Naive thymus-derived CD4-positive, alpha-beta T cell (primary cell): ENCODE measurements at regions of chr13 and their contacts with region 1.

Region 1: DNA sequence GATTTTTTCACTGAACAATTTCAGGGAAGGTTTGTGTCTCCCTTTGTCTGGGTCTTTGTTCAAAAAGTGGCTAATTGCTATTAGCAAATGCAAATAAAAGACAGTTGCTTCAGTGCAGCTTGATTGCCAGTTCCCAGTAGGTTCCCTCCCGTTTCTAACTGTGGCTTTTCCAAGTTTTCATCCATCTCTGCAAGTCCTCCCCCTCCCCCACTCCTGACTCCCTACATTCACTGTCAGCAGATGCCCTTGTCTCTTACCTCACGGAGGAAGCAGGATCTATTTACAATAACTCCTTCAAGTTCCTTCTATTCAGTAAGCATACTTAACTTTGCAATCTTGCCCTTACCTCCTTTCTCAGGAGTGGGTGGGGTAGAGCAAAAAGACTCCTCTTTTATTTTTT is 55.4 kb upstream of the SCEL start:
- DNase-seq: no peak
- ATAC-seq: no peak
- H3K4me3 ChIP-seq: no peak overlapping the region
- H3K4me3 Mint-ChIP-seq: no peak overlapping the region
- H3K27ac ChIP-seq: no peak overlapping the region
- H3K27ac Mint-ChIP-seq: no peak overlapping the region
- H3K4me1 ChIP-seq: no peaks in the 10 kb centered on the region
- H3K4me1 Mint-ChIP-seq: peaks cover 0 to 14% (median 9%) of the 10 kb centered on the region in 7 donors
- H3K27me3 ChIP-seq: no peaks in the 10 kb centered on the region
- H3K27me3 Mint-ChIP-seq: peaks cover 0 to 6% (median 0%) of the 10 kb centered on the region in 5 donors

Region 2: GRCh38 chr13:77026818-77027585 is 453.1 kb before region 1 on chr13 and contains the start of gene FBXL3:
- CTCF ChIA-PET with region 1: no interaction called
- POLR2A ChIA-PET with region 1: interaction called, 4 read pairs
- intact Hi-C with region 1: loop called (anchors 2 to 10 kb)
- DNase-seq: peak; percentile 77 to 88 (median 84)
- ATAC-seq: peak; percentile 90
- H3K4me3 ChIP-seq: peak within 1 kb of the TSS; percentile 87
- H3K4me3 Mint-ChIP-seq: peak within 1 kb of the TSS; percentile 93 to 100 (median 98)
- H3K27ac ChIP-seq: peak within 1 kb of the TSS; percentile 100
- H3K27ac Mint-ChIP-seq: peak within 1 kb of the TSS; percentile 92 to 99 (median 94)
- H3K4me1 ChIP-seq: peaks cover 30 to 35% of the 10 kb centered on the region in 2 donors
- H3K4me1 Mint-ChIP-seq: peaks cover 36 to 61% (median 51%) of the 10 kb centered on the region in 7 donors
- H3K27me3 ChIP-seq: no peaks in the 10 kb centered on the region
- H3K27me3 Mint-ChIP-seq: peaks cover 0 to 6% (median 3%) of the 10 kb centered on the region in 5 donors
- total RNA-seq, gene FBXL3: 44.2 to 94.2 (median 70.8) TPM

Region 3: DNA sequence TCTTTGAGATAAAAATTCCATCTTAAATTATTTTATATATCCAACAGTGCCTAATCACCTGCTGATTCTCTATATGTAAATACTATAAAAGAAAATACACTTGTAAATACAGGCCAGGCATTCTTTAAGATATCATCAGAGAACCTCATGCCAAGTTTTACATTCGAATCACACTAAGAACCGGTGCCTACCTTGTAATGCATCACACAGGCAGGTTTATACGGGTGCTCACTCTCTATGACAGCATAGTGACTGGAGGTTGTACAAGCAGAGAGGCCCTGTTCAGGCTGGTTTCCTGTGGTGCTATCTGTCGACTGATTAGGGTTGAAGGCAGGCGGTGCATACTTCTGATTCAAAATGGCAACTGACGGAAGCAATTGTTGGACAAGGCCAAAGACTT is 311.8 kb before region 1 on chr13:
- CTCF ChIA-PET with region 1: interaction called, 7 read pairs
- POLR2A ChIA-PET with region 1: interaction called, 3 read pairs
- intact Hi-C with region 1: loop called in 1 of 2 experiments (anchors 5 kb)
- DNase-seq: no peak
- ATAC-seq: no peak
- H3K4me3 ChIP-seq: no peak overlapping the region
- H3K4me3 Mint-ChIP-seq: no peak overlapping the region
- H3K27ac ChIP-seq: no peak overlapping the region
- H3K27ac Mint-ChIP-seq: no peak overlapping the region
- H3K4me1 ChIP-seq: no peaks in the 10 kb centered on the region
- H3K4me1 Mint-ChIP-seq: peaks cover 0 to 12% (median 7%) of the 10 kb centered on the region in 7 donors
- H3K27me3 ChIP-seq: no peaks in the 10 kb centered on the region
- H3K27me3 Mint-ChIP-seq: no peaks in the 10 kb centered on the region

Region 4: DNA sequence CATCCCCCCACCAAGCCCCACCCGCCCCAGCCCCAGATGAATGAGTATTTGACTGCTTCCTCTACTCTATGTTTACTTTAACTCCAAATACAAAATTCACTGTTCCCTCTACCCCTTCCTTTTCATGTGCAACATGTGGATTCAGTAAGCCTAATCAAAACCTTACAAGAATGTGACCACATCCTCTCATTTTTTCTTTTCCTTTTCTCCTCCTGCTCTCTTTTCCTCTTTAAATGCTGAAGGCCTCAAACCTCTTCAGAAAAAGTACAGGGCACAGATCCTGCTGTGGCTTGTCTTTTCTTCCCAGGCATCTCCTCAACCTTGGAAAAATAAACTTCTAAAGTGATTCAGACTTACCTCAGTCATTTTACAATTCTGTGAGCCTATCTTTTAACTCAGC is 272.1 kb before region 1 on chr13:
- CTCF ChIA-PET with region 1: no interaction called
- POLR2A ChIA-PET with region 1: no interaction called
- intact Hi-C with region 1: loop called in 1 of 2 experiments (anchors 5 kb)
- DNase-seq: peak in 2 of 9 donors; percentile 9 to 10
- ATAC-seq: no peak
- H3K4me3 ChIP-seq: no peak overlapping the region
- H3K4me3 Mint-ChIP-seq: peak overlapping the region in 2 of 10 donors; percentile 27 to 35
- H3K27ac ChIP-seq: peak overlapping the region; percentile 20
- H3K27ac Mint-ChIP-seq: peak overlapping the region; percentile 3 to 77 (median 41)
- H3K4me1 ChIP-seq: no peaks in the 10 kb centered on the region
- H3K4me1 Mint-ChIP-seq: peaks cover 5 to 33% (median 23%) of the 10 kb centered on the region in 7 donors
- H3K27me3 ChIP-seq: no peaks in the 10 kb centered on the region
- H3K27me3 Mint-ChIP-seq: no peaks in the 10 kb centered on the region

Region 5: DNA sequence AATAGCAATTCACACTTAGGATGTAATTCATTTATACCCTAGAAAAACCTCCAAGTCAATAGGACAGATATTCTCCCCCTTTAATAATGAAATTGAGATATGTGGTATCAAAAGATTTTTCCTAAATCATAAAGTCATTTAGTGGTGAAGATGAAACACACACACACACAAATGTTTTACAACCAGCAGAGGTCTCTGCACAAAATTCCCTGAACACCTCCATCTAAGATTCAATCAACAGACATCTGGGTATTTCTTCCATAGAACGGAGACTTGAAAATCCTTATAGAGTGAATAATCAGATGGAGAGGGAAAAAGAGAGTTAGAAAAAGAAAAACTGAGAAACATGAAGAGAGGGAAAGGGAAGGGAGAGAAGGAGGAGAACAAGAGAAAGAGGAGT is 205.9 kb before region 1 on chr13:
- CTCF ChIA-PET with region 1: interaction called, 11 read pairs
- POLR2A ChIA-PET with region 1: interaction called, 3 read pairs
- intact Hi-C with region 1: loop called (anchors 1 to 5 kb)
- DNase-seq: peak in 1 of 9 donors; percentile 6
- ATAC-seq: no peak
- H3K4me3 ChIP-seq: no peak overlapping the region
- H3K4me3 Mint-ChIP-seq: no peak overlapping the region
- H3K27ac ChIP-seq: no peak overlapping the region
- H3K27ac Mint-ChIP-seq: peak overlapping the region in 2 of 9 donors; percentile 19 to 73
- H3K4me1 ChIP-seq: no peaks in the 10 kb centered on the region
- H3K4me1 Mint-ChIP-seq: peaks cover 0 to 36% (median 18%) of the 10 kb centered on the region in 7 donors
- H3K27me3 ChIP-seq: no peaks in the 10 kb centered on the region
- H3K27me3 Mint-ChIP-seq: no peaks in the 10 kb centered on the region

Region 6: GRCh38 chr13:77345150-77345780 is 134.8 kb before region 1 on chr13:
- CTCF ChIA-PET with region 1: no interaction called
- POLR2A ChIA-PET with region 1: no interaction called
- intact Hi-C with region 1: no loop called
- DNase-seq: no peak
- ATAC-seq: no peak
- H3K4me3 ChIP-seq: no peak overlapping the region
- H3K4me3 Mint-ChIP-seq: peak overlapping the region in 1 of 10 donors; percentile 5
- H3K27ac ChIP-seq: no peak overlapping the region
- H3K27ac Mint-ChIP-seq: peak overlapping the region in 1 of 9 donors; percentile 49
- H3K4me1 ChIP-seq: no peaks in the 10 kb centered on the region
- H3K4me1 Mint-ChIP-seq: peaks cover 10 to 24% (median 17%) of the 10 kb centered on the region in 7 donors
- H3K27me3 ChIP-seq: no peaks in the 10 kb centered on the region
- H3K27me3 Mint-ChIP-seq: no peaks in the 10 kb centered on the region

Region 7: GRCh38 chr13:77383097-77383496 is 97.0 kb before region 1 on chr13:
- CTCF ChIA-PET with region 1: no interaction called
- POLR2A ChIA-PET with region 1: no interaction called
- intact Hi-C with region 1: no loop called
- DNase-seq: no peak
- ATAC-seq: no peak
- H3K4me3 ChIP-seq: no peak overlapping the region
- H3K4me3 Mint-ChIP-seq: no peak overlapping the region
- H3K27ac ChIP-seq: no peak overlapping the region
- H3K27ac Mint-ChIP-seq: no peak overlapping the region
- H3K4me1 ChIP-seq: no peaks in the 10 kb centered on the region
- H3K4me1 Mint-ChIP-seq: peaks cover 0 to 3% (median 0%) of the 10 kb centered on the region in 7 donors
- H3K27me3 ChIP-seq: no peaks in the 10 kb centered on the region
- H3K27me3 Mint-ChIP-seq: peaks cover 0 to 42% (median 7%) of the 10 kb centered on the region in 5 donors

Region 8: GRCh38 chr13:77751513-77752456 is 271.7 kb after region 1 on chr13:
- CTCF ChIA-PET with region 1: interaction called, 3 read pairs
- POLR2A ChIA-PET with region 1: no interaction called
- intact Hi-C with region 1: loop called (anchors 5 kb)
- DNase-seq: peak in 7 of 9 donors; percentile 22 to 63 (median 56)
- ATAC-seq: peak; percentile 86
- H3K4me3 ChIP-seq: no peak overlapping the region
- H3K4me3 Mint-ChIP-seq: no peak overlapping the region
- H3K27ac ChIP-seq: no peak overlapping the region
- H3K27ac Mint-ChIP-seq: peak overlapping the region in 3 of 9 donors; percentile 10 to 77 (median 43)
- H3K4me1 ChIP-seq: peaks cover 0 to 4% of the 10 kb centered on the region in 2 donors
- H3K4me1 Mint-ChIP-seq: peaks cover 9 to 34% (median 18%) of the 10 kb centered on the region in 7 donors
- H3K27me3 ChIP-seq: no peaks in the 10 kb centered on the region
- H3K27me3 Mint-ChIP-seq: no peaks in the 10 kb centered on the region

Region 9: GRCh38 chr13:77874406-77874805 is 394.3 kb after region 1 on chr13:
- CTCF ChIA-PET with region 1: no interaction called
- POLR2A ChIA-PET with region 1: no interaction called
- intact Hi-C with region 1: no loop called
- DNase-seq: no peak
- ATAC-seq: no peak
- H3K4me3 ChIP-seq: no peak overlapping the region
- H3K4me3 Mint-ChIP-seq: no peak overlapping the region
- H3K27ac ChIP-seq: no peak overlapping the region
- H3K27ac Mint-ChIP-seq: no peak overlapping the region
- H3K4me1 ChIP-seq: no peaks in the 10 kb centered on the region
- H3K4me1 Mint-ChIP-seq: no peaks in the 10 kb centered on the region
- H3K27me3 ChIP-seq: no peaks in the 10 kb centered on the region
- H3K27me3 Mint-ChIP-seq: peaks cover 0 to 17% (median 4%) of the 10 kb centered on the region in 5 donors

Region 10: GRCh38 chr13:78742659-78743058 is 1262.6 kb after region 1 on chr13:
- CTCF ChIA-PET with region 1: no interaction called
- POLR2A ChIA-PET with region 1: no interaction called
- intact Hi-C with region 1: no loop called
- DNase-seq: no peak
- ATAC-seq: no peak
- H3K4me3 ChIP-seq: no peak overlapping the region
- H3K4me3 Mint-ChIP-seq: no peak overlapping the region
- H3K27ac ChIP-seq: no peak overlapping the region
- H3K27ac Mint-ChIP-seq: no peak overlapping the region
- H3K4me1 ChIP-seq: no peaks in the 10 kb centered on the region
- H3K4me1 Mint-ChIP-seq: no peaks in the 10 kb centered on the region
- H3K27me3 ChIP-seq: no peaks in the 10 kb centered on the region
- H3K27me3 Mint-ChIP-seq: peaks cover 0 to 32% (median 21%) of the 10 kb centered on the region in 5 donors